Heart left ventricle (tissue), 16 donors: ENCODE measurements at regions of chr16 and their contacts with region 1.

Region 1: GRCh38 chr16:88811769-88812512 is at the start of gene APRT:
- DNase-seq: peak; percentile 95 to 99 (median 95)
- ATAC-seq: peak; percentile 86 to 93 (median 92)
- H3K4me3 ChIP-seq: peak within 1 kb of the TSS; percentile 41 to 88 (median 78)
- H3K27ac ChIP-seq: peak within 1 kb of the TSS; percentile 72 to 98 (median 92)
- H3K4me1 ChIP-seq: peaks cover 0 to 41% (median 24%) of the 10 kb centered on the region in 12 donors
- H3K27me3 ChIP-seq: no peaks in the 10 kb centered on the region
- CTCF ChIP-seq: peak; percentile 16 to 62 (median 42)
- POLR2A ChIP-seq: peak in 1 of 2 donors; percentile 73
- total RNA-seq, gene APRT: 26.6 to 75.8 (median 44.2) TPM

Region 2: GRCh38 chr16:88866151-88866920 is 54.4 kb after region 1 on chr16 and contains the start of gene PABPN1L:
- intact Hi-C with region 1: loop called in 2 of 10 experiments (anchors 5 to 10 kb)
- DNase-seq: no peak
- ATAC-seq: no peak
- H3K4me3 ChIP-seq: no peak within 1 kb of the TSS
- H3K27ac ChIP-seq: no peak within 1 kb of the TSS
- H3K4me1 ChIP-seq: peaks cover 0 to 16% (median 5%) of the 10 kb centered on the region in 12 donors
- H3K27me3 ChIP-seq: peaks cover 0 to 6% (median 0%) of the 10 kb centered on the region in 9 donors
- CTCF ChIP-seq: no peak
- POLR2A ChIP-seq: no peak
- total RNA-seq, gene PABPN1L: not detected

Region 3: DNA sequence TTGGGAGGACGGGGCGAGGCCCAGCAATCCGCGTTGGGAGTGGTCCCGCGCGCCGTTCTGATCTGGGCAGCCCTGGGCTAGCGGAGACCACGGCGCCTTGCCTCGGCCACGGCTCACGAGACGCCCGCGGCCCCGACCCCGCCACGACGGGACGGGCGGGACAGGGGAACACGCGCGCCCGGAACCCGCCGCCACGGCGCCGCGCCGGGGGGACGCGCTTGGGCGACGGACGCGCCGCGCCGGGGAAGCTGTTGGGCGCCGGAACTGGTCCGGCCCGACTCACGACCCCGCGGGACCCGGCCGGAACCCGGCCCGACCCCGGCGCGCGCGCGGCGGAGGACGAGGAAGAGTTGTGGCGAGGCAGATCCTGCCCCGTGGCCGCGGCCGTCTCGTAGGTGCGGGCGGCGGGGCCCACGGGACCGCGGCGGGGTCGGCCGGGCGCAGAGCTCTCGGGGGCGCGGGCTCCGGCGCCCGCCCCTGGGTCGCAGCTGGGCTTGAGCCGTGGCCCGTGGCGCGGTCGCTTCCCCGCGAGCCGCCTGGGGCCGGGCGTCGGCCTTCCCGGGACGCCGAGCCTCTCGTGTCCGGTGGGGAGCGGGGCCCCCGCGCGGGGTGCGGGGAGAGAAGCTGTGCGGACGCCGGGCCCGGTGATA is 281.8 kb after region 1 on chr16 and contains the start of gene ACSF3:
- intact Hi-C with region 1: loop called in 3 of 10 experiments (anchors 10 kb)
- DNase-seq: peak; percentile 61 to 89 (median 71)
- ATAC-seq: peak; percentile 70 to 92 (median 90)
- H3K4me3 ChIP-seq: peak within 1 kb of the TSS; percentile 73 to 99 (median 84)
- H3K27ac ChIP-seq: peak within 1 kb of the TSS in 11 of 12 donors; percentile 24 to 84 (median 74)
- H3K4me1 ChIP-seq: peaks cover 6 to 45% (median 18%) of the 10 kb centered on the region in 12 donors
- H3K27me3 ChIP-seq: peaks cover 0 to 23% (median 9%) of the 10 kb centered on the region in 9 donors
- CTCF ChIP-seq: no peak
- POLR2A ChIP-seq: no peak
- total RNA-seq, gene ACSF3: 10.3 to 26.3 (median 19.3) TPM

Region 4: DNA sequence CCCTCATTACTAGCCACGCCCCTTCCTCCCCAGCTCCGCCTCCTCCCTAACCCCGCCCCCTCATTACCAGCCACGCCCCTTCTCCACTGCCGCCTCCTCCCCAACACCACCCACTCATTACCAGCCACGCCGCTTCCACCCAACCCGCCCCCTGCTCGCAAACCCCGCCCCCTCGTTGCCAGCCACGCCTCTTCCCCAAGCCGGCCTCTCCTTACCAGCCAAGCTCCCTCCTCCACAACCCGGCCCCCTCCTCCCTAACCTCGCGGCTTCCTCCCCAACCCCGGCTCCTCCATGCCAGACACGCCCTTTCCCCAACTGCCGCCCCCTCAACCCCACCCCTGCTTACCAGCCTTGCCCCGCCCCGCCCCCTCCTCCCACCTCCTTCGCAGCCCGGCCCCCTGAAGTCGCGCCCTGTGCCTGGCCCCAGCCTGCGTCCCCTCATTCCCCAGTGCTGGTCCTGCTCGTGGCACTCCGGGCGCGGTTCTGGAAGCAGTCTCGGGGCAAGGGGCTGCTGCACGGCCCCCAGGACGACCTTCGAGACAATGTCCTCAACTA is 381.2 kb after region 1 on chr16:
- intact Hi-C with region 1: loop called in 1 of 10 experiments (anchors 10 kb)
- DNase-seq: peak in 3 of 5 donors; percentile 36 to 86 (median 77)
- ATAC-seq: peak; percentile 42 to 62 (median 52)
- H3K4me3 ChIP-seq: peak overlapping the region in 1 of 12 donors; percentile 56
- H3K27ac ChIP-seq: no peak overlapping the region
- H3K4me1 ChIP-seq: peaks cover 0 to 13% (median 7%) of the 10 kb centered on the region in 12 donors
- H3K27me3 ChIP-seq: peaks cover 0 to 7% (median 5%) of the 10 kb centered on the region in 9 donors
- CTCF ChIP-seq: no peak
- POLR2A ChIP-seq: no peak